GM10248 (cell line): ENCODE measurements at regions of chr12 and their contacts with region 1.

Region 1: GRCh38 chr12:85484387-85484786 is 204.4 kb downstream of the ALX1 start:
- DNase-seq: no peak
- CTCF ChIP-seq: no peak

Region 2: GRCh38 chr12:85468356-85469157 is 15.8 kb before region 1 on chr12:
- CTCF ChIA-PET with region 1: interaction called, 11 read pairs
- POLR2A ChIA-PET with region 1: no interaction called
- DNase-seq: peak; percentile 55
- CTCF ChIP-seq: peak; percentile 80